Stomach (tissue), 19 donors: ENCODE measurements at regions of chr6 and their contacts with region 1.

Region 1: DNA sequence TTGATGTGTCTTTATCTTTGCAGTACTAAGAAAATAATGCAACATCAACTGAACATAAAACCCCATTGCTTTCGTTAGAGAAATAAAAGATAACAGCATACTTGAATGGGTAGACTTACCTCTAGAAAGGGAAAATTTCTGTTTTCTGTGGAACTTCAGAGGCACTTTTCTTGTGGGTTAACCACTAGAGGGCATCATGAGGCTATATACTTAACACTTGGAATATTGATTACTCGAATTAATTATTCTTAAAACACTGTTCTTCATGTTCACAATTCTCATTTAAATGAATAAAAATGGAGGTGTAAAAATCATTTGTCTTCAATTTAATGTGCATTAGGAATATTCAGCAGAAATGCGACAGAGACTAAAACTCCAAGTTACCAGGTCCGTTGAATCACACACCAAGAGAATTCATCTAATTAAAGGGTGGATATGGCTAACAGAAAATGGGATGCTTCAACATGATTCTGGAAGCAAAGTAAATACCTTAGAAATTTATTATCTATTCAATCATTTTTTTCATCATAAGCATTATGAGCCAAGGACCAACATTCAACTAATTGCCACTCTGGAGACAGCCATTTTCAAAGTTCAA is 330.8 kb upstream of the PREP start:
- DNase-seq: peak in 1 of 2 donors; percentile 42
- H3K4me3 ChIP-seq: no peak overlapping the region
- H3K27ac ChIP-seq: no peak overlapping the region
- H3K4me1 ChIP-seq: no peaks in the 10 kb centered on the region
- H3K27me3 ChIP-seq: no peaks in the 10 kb centered on the region
- CTCF ChIP-seq: peak in 5 of 7 experiments; percentile 26 to 62 (median 50)
- EP300 ChIP-seq: no peak
- POLR2A ChIP-seq: no peak

Region 2: GRCh38 chr6:106223300-106223930 is 489.8 kb after region 1 on chr6:
- intact Hi-C with region 1: loop called (anchors 10 kb)
- DNase-seq: peak; percentile 71 to 87
- H3K4me3 ChIP-seq: no peak overlapping the region
- H3K27ac ChIP-seq: no peak overlapping the region
- H3K4me1 ChIP-seq: peaks cover 0 to 31% (median 11%) of the 10 kb centered on the region in 4 donors
- H3K27me3 ChIP-seq: no peaks in the 10 kb centered on the region
- CTCF ChIP-seq: peak in 3 of 7 experiments; percentile 43 to 63 (median 55)
- EP300 ChIP-seq: no peak
- POLR2A ChIP-seq: no peak